ENCODE measurements at regions of chr2 and their contacts with region 1.

Region 1: GRCh38 chr2:41169744-41170143 is 717.9 kb upstream of the SLC8A1 start:
- DNase-seq: no peak
- H3K4me3 ChIP-seq: no peak overlapping the region
- H3K27ac ChIP-seq: no peak overlapping the region
- H3K4me1 ChIP-seq: peaks cover 0 to 5% (median 1%) of the 10 kb centered on the region in 4 experiments; a peak in 2 of 7 replicates
- H3K27me3 ChIP-seq: no peaks in the 10 kb centered on the region
- CTCF ChIP-seq: peak in 2 of 3 experiments; percentile 6 to 27; a peak in 1 of 4 replicates
- EP300 ChIP-seq: no peak
- POLR2A ChIP-seq: no peak
- RAD21 ChIP-seq: peak in 1 of 2 experiments; percentile 32; a peak in 2 of 4 replicates

Region 2: GRCh38 chr2:41033131-41033530 is 136.6 kb before region 1 on chr2:
- CTCF ChIA-PET with region 1: no interaction called
- POLR2A ChIA-PET with region 1: no interaction called
- DNase-seq: peak in 1 of 2 experiments; percentile 9
- H3K4me3 ChIP-seq: no peak overlapping the region
- H3K27ac ChIP-seq: no peak overlapping the region
- H3K4me1 ChIP-seq: peaks cover 0 to 5% (median 0%) of the 10 kb centered on the region in 4 experiments; a peak in 2 of 7 replicates
- H3K27me3 ChIP-seq: no peaks in the 10 kb centered on the region
- CTCF ChIP-seq: no peak
- EP300 ChIP-seq: no peak
- POLR2A ChIP-seq: no peak
- RAD21 ChIP-seq: no peak

Region 3: GRCh38 chr2:41145066-41145465 is 24.7 kb before region 1 on chr2:
- CTCF ChIA-PET with region 1: no interaction called
- POLR2A ChIA-PET with region 1: no interaction called
- DNase-seq: no peak
- H3K4me3 ChIP-seq: no peak overlapping the region
- H3K27ac ChIP-seq: no peak overlapping the region
- H3K4me1 ChIP-seq: no peaks in the 10 kb centered on the region
- H3K27me3 ChIP-seq: no peaks in the 10 kb centered on the region
- CTCF ChIP-seq: no peak
- EP300 ChIP-seq: no peak
- POLR2A ChIP-seq: no peak
- RAD21 ChIP-seq: no peak

Region 4: DNA sequence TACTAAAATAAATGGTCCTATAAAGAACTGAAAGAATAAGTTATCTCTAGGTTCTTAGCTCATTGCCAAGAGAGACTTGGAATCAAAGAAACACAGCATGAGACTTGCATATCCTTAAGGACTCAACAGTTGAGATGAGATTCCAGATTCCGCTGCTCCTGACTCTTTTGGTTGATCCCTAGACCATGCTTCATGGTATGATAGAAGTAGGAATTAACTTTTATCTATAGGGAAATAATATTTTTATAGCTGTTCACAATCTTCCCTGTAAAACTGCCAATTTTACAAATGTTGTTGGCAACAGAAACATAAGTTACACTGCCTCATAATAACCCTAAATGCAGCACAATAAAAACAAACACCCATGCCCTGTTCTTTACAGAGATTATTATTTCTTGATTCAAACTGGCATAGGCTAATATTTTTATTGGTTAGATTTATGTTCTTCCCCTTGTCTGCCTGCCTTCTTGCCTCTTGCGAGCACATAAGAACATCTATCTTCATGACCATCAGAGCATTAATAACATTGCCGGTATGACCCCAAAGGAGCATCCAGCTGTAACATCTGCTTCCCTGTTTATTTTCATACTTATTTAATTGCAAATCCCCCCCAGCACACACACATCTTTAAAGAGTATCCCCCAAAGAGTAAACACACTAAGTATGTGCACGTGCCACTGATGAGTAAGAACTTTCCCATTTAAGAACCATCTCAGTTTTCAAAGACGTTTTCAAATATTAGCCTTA is 17.8 kb after region 1 on chr2:
- CTCF ChIA-PET with region 1: interaction called, 10 read pairs
- POLR2A ChIA-PET with region 1: no interaction called
- DNase-seq: no peak
- H3K4me3 ChIP-seq: no peak overlapping the region
- H3K27ac ChIP-seq: no peak overlapping the region
- H3K4me1 ChIP-seq: no peaks in the 10 kb centered on the region
- H3K27me3 ChIP-seq: no peaks in the 10 kb centered on the region
- CTCF ChIP-seq: no peak
- EP300 ChIP-seq: no peak
- POLR2A ChIP-seq: no peak
- RAD21 ChIP-seq: no peak

Region 5: DNA sequence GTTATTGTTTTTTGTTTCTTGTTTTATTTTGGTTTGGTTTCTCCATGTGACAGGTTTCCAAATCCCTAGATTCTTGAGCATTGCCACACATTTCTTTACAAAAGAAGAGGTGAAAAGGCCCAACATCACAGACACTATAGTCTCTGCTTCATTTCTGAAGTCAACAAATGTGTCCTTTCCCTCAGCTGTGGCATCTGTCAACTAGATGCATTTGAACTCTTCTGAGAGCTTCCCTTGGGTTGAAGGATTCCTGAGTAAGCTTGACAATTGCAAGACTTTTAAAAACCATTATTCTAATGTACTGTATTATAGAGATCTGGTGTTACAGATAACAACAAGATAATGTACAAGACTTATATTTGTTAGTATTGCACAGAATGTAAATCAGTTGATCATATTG is 174.8 kb after region 1 on chr2:
- CTCF ChIA-PET with region 1: no interaction called
- POLR2A ChIA-PET with region 1: no interaction called
- DNase-seq: no peak
- H3K4me3 ChIP-seq: no peak overlapping the region
- H3K27ac ChIP-seq: no peak overlapping the region
- H3K4me1 ChIP-seq: no peaks in the 10 kb centered on the region
- H3K27me3 ChIP-seq: no peaks in the 10 kb centered on the region
- CTCF ChIP-seq: no peak
- EP300 ChIP-seq: no peak
- POLR2A ChIP-seq: no peak
- RAD21 ChIP-seq: no peak

Region 6: GRCh38 chr2:41775366-41776032 is 605.8 kb after region 1 on chr2:
- CTCF ChIA-PET with region 1: no interaction called
- POLR2A ChIA-PET with region 1: no interaction called
- DNase-seq: no peak
- H3K4me3 ChIP-seq: no peak overlapping the region
- H3K27ac ChIP-seq: no peak overlapping the region
- H3K4me1 ChIP-seq: peaks cover 0 to 3% (median 0%) of the 10 kb centered on the region in 4 experiments; a peak in 2 of 7 replicates
- H3K27me3 ChIP-seq: no peaks in the 10 kb centered on the region
- CTCF ChIP-seq: no peak
- EP300 ChIP-seq: no peak
- POLR2A ChIP-seq: no peak
- RAD21 ChIP-seq: no peak

Measured in H1 (cell line).